K562 (cell line): ENCODE measurements at regions of chr15 and their contacts with region 1.

Region 1: DNA sequence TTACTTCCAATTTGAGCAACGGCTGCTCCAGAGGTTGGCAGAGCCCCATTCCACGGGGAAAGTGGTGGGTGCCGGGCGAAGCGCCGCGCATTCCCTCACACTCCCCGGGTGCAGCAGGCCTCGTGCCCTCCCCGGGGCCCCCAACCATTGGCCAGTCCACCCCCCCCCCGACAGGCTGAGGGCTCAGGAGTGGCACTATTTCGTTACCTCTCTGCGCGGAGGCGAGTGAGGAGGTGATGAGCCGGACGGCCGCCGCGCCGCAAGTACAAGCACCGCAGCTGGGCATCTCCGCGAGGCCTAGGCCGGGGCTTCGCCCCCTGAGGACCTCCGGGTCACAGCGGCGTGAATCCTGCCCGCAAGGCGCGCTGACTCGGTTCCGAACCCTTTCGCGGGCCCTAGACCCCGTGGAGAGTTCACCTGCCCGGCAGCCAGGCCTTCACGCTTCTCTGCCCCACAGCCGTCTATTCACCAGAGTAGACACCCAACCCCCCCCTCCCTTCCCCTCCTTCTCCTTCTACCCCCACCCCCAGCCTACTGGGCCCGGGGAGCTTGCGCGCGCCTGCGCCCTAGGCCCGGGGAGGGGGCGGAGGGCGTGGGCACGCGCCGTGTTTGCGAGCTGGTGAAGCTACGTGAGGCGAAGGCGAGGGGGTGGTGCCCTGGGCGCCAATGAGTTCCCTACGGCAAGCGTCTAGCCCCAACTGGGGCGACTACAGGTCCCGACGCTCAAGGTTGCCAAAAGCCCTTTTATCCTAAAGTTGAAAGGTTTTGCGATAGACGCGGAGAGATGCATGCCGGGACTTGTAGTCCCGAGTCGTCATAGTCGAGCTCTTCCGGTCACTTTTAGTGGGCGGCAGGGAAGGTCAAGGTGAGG is at the start of gene CLPX:
- DNase-seq: peak; percentile 94 to 98 (median 97)
- ATAC-seq: peak; percentile 91
- H3K4me3 ChIP-seq: peak within 1 kb of the TSS; percentile 70
- H3K27ac ChIP-seq: peak within 1 kb of the TSS; percentile 86
- H3K4me1 ChIP-seq: peaks cover 10 to 12% of the 10 kb centered on the region in 2 experiments; a peak in 4 of 5 replicates
- H3K27me3 ChIP-seq: no peaks in the 10 kb centered on the region
- CTCF ChIP-seq: no peak
- EP300 ChIP-seq: no peak
- POLR2A ChIP-seq: peak; percentile 79
- RAD21 ChIP-seq: no peak
- polyA plus RNA-seq, gene CLPX: 11.2 to 13.4 TPM

Region 2: DNA sequence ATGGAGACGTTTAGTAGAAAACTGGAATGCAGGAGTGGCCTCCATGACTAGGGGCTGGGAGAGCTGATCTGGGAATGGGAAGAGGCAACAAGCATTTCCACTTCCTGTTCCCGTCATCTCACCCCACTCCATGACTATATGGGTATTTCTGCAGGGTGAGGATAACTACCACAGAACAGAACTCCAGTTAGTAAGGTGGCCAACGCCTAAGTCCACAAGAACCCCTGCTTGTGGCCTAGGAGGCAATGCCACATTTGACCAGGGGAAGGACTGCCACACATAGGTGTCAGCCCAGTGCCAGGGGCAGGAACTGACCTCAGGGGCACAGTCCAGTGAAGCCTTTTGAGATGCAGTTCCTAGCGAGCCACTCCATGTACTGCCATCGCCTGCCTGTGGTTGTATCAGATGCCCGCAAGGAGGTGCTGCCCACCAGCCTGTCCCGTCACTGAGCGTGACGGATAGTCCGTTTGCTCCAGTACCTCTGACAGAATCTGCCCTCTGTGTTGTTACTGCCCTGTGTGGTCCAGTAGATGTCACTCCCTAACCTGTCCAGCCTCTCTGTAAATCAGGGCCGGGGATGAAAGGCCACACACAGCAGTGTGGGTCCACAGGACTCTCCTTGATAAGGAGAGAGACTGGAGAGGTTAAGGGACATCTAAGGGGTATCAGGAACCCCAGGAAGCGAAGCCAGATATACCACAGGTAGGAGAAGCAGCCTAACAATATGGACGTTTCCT is 152.1 kb before region 1 on chr15:
- CTCF ChIA-PET with region 1: no interaction called
- POLR2A ChIA-PET with region 1: no interaction called
- in situ Hi-C with region 1: no loop called
- intact Hi-C with region 1: loop called (anchors 5 kb)
- DNase-seq: peak; percentile 48 to 72 (median 52)
- ATAC-seq: peak; percentile 77
- H3K4me3 ChIP-seq: no peak overlapping the region
- H3K27ac ChIP-seq: no peak overlapping the region
- H3K4me1 ChIP-seq: peaks cover 7 to 13% of the 10 kb centered on the region in 2 experiments; a peak in 4 of 5 replicates
- H3K27me3 ChIP-seq: no peaks in the 10 kb centered on the region
- CTCF ChIP-seq: peak; percentile 78 to 86 (median 80)
- EP300 ChIP-seq: no peak
- POLR2A ChIP-seq: no peak
- RAD21 ChIP-seq: peak; percentile 45 to 77

Region 3: GRCh38 chr15:65275728-65276126 is 90.6 kb after region 1 on chr15:
- CTCF ChIA-PET with region 1: interaction called, 24 read pairs
- POLR2A ChIA-PET with region 1: interaction called, 8 read pairs
- in situ Hi-C with region 1: no loop called
- intact Hi-C with region 1: loop called (anchors 1 kb)
- DNase-seq: peak; percentile 37 to 48 (median 42)
- ATAC-seq: no peak; the same call in 2 of the 3 replicates
- H3K4me3 ChIP-seq: no peak overlapping the region
- H3K27ac ChIP-seq: no peak overlapping the region
- H3K4me1 ChIP-seq: peaks cover 4 to 11% of the 10 kb centered on the region in 2 experiments; a peak in 4 of 5 replicates
- H3K27me3 ChIP-seq: no peaks in the 10 kb centered on the region
- CTCF ChIP-seq: no peak
- EP300 ChIP-seq: peak; percentile 63
- POLR2A ChIP-seq: no peak
- RAD21 ChIP-seq: no peak

Region 4: GRCh38 chr15:65292938-65293518 is 107.9 kb after region 1 on chr15:
- CTCF ChIA-PET with region 1: interaction called, 19 read pairs
- POLR2A ChIA-PET with region 1: interaction called, 36 read pairs
- in situ Hi-C with region 1: loop called (anchors 5 kb)
- intact Hi-C with region 1: loop called (anchors 1 kb)
- DNase-seq: no peak
- ATAC-seq: no peak
- H3K4me3 ChIP-seq: no peak overlapping the region
- H3K27ac ChIP-seq: no peak overlapping the region
- H3K4me1 ChIP-seq: peaks cover 7 to 15% of the 10 kb centered on the region in 2 experiments; a peak in 4 of 5 replicates
- H3K27me3 ChIP-seq: no peaks in the 10 kb centered on the region
- CTCF ChIP-seq: no peak
- EP300 ChIP-seq: no peak
- POLR2A ChIP-seq: no peak
- RAD21 ChIP-seq: no peak

Region 5: GRCh38 chr15:65384895-65385858 is 200.1 kb after region 1 on chr15:
- CTCF ChIA-PET with region 1: interaction called, 10 read pairs
- POLR2A ChIA-PET with region 1: interaction called, 4 read pairs
- in situ Hi-C with region 1: no loop called
- intact Hi-C with region 1: loop called (anchors 1 kb)
- DNase-seq: peak; percentile 88 to 91 (median 90)
- ATAC-seq: peak; percentile 96
- H3K4me3 ChIP-seq: peak overlapping the region; percentile 20; the same call in 1 of the 2 replicates
- H3K27ac ChIP-seq: no peak overlapping the region
- H3K4me1 ChIP-seq: peaks cover 6 to 15% of the 10 kb centered on the region in 2 experiments; a peak in 4 of 5 replicates
- H3K27me3 ChIP-seq: peaks cover 48 to 66% of the 10 kb centered on the region in 2 experiments; a peak in 4 of 5 replicates
- CTCF ChIP-seq: peak; percentile 93 to 97 (median 96)
- EP300 ChIP-seq: no peak
- POLR2A ChIP-seq: no peak
- RAD21 ChIP-seq: peak; percentile 86 to 96

Region 6: DNA sequence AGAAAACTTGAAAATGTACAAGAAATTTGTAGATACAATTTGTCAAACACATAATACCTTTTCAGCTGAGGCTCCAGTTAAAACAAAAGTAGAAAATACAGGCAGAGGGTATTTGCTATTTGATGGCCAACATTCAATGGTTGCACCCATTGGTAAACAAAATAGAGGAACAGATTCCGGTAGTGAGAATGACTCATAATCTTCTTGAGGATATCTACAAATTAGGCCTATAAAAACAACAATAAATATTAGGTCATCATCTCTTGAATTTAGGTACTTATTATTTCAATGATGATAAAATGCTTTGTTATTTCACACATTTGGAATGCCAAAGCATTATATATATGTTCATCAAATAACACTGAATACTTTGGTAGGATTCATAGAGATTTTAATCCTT is 553.5 kb after region 1 on chr15:
- CTCF ChIA-PET with region 1: no interaction called
- POLR2A ChIA-PET with region 1: no interaction called
- in situ Hi-C with region 1: no loop called
- intact Hi-C with region 1: no loop called
- DNase-seq: no peak
- ATAC-seq: no peak
- H3K4me3 ChIP-seq: no peak overlapping the region
- H3K27ac ChIP-seq: no peak overlapping the region
- H3K4me1 ChIP-seq: peaks cover 4 to 8% of the 10 kb centered on the region in 2 experiments; a peak in 4 of 5 replicates
- H3K27me3 ChIP-seq: no peaks in the 10 kb centered on the region
- CTCF ChIP-seq: no peak
- EP300 ChIP-seq: no peak
- POLR2A ChIP-seq: no peak
- RAD21 ChIP-seq: no peak